Mammary epithelial cell (primary cell): ENCODE measurements at regions of chr1 and their contacts with region 1.

Region 1: DNA sequence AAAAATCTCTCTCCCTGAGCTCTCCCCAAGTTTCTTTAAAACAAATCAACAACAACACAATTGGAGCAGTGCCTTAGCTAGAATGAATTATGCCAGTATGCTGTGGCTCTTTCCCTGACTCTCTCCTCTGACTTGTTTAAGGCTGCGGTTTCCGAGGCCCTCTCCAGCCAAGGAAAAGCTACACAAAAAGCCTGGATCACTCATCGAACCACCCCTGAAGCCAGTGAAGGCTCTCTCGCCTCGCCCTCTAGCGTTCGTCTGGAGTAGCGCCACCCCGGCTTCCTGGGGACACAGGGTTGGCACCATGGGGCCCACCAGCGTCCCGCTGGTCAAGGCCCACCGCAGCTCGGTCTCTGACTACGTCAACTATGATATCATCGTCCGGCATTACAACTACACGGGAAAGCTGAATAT is 1.9 kb downstream of the S1PR1 start:
- DNase-seq: peak; percentile 83
- H3K4me3 ChIP-seq: peak overlapping the region in 2 of 3 experiments; percentile 36 to 87
- H3K27ac ChIP-seq: peak overlapping the region; percentile 34
- H3K4me1 ChIP-seq: peaks cover 12% of the 10 kb centered on the region
- H3K27me3 ChIP-seq: no peaks in the 10 kb centered on the region
- CTCF ChIP-seq: peak; percentile 97 to 98

Region 2: DNA sequence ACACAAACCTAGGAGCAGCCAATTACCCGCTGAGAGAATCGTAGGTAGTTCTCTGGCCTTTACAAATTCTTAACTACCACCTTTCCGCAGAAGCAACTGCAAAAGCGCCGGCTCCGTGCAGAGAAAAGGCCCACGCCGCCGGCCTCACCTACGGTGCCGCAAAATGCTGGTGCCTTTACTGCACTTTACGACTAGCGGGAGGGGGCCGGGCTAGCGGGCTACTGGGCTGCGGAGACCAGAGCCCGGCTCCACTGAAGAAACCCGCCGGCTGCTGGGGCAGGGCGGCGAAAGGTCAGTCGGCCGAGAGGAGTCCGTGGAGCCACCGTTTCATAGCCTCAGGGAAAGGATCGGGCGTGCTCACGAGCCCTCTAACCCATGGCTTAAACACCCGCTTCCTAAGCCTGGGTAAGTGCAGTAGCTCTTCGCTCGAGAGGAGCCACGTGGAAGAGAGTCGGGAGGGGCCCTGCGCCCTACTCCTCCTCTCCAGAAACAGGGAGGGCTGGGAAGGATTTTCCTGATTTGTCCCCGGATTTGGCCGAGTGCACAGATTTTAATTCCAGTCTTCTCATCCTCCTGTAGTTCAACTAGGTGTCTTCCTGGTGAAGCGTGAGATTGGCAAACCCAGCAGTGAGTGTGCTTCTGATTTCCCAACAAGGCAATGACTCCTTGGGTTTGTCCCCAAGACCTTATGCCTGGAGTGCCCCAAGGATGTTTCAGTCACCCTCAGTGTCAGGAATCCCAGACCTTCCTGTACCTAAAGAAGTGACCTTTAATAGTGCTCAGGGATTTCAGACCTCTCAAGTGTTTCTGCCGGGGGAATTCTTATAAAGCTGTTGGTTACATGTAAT is 212.8 kb before region 1 on chr1 and contains the start of gene DPH5:
- CTCF ChIA-PET with region 1: no interaction called
- dilution Hi-C with region 1: no loop called
- in situ Hi-C with region 1: loop called in 1 of 2 experiments (anchors 10 kb)
- intact Hi-C with region 1: loop called (anchors 1 kb)
- DNase-seq: peak; percentile 88
- H3K4me3 ChIP-seq: peak within 1 kb of the TSS; percentile 71 to 97 (median 94)
- H3K27ac ChIP-seq: peak within 1 kb of the TSS; percentile 80
- H3K4me1 ChIP-seq: no peaks in the 10 kb centered on the region
- H3K27me3 ChIP-seq: no peaks in the 10 kb centered on the region
- CTCF ChIP-seq: no peak
- total RNA-seq, gene DPH5: 21.2 to 47.0 TPM

Region 3: GRCh38 chr1:101136739-101137138 is 101.9 kb before region 1 on chr1:
- CTCF ChIA-PET with region 1: interaction called, 3 read pairs
- dilution Hi-C with region 1: no loop called
- in situ Hi-C with region 1: no loop called
- intact Hi-C with region 1: loop called (anchors 1 kb)
- DNase-seq: no peak
- H3K4me3 ChIP-seq: no peak overlapping the region
- H3K27ac ChIP-seq: no peak overlapping the region
- H3K4me1 ChIP-seq: peaks cover 12% of the 10 kb centered on the region
- H3K27me3 ChIP-seq: no peaks in the 10 kb centered on the region
- CTCF ChIP-seq: peak in 1 of 2 donors; percentile 15

Region 4: DNA sequence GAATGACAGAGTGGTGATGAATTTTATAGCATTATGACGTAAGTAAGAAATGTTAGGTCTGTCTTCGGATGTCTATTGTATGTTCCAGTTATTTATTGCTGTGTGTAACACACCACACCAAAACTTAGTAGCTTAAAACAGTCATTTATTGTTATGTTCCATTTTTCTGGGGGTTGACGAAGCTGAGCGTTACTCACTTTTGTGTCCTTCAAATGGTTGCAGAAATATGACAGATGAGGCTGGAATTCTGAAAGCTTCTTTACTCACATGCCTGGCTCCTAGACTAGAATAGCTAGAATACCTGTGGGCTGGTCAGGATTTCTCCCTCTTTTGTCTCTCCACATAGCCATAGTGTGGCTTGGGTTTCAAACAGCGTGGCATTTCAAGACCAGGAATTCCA is 64.0 kb before region 1 on chr1:
- CTCF ChIA-PET with region 1: no interaction called
- dilution Hi-C with region 1: no loop called
- in situ Hi-C with region 1: no loop called
- intact Hi-C with region 1: loop called (anchors 1 kb)
- DNase-seq: peak; percentile 87
- H3K4me3 ChIP-seq: no peak overlapping the region
- H3K27ac ChIP-seq: peak overlapping the region; percentile 58
- H3K4me1 ChIP-seq: peaks cover 23% of the 10 kb centered on the region
- H3K27me3 ChIP-seq: no peaks in the 10 kb centered on the region
- CTCF ChIP-seq: no peak

Region 5: DNA sequence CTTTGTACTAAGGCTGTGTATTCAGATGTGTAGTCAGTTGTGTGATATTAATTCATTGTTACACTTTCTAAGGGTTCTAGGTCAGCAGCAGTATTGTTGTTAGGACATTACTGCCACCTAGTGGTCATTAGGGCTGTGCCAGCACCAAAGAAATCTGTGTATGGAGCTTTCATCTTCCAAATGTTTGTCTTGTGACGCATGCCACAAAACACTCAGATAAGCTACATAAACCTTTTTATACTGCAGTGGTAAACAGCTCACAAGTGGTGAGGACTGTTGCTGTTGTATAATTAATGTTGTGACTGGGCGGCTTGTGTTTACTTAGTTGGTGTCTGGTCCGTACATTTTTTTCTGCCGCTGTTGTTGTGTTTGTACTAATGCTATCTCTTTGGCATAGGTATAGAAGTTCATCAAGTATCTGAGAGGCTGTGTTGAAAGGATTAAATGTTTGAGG is 49.8 kb after region 1 on chr1:
- CTCF ChIA-PET with region 1: interaction called, 47 read pairs
- dilution Hi-C with region 1: no loop called
- in situ Hi-C with region 1: no loop called
- intact Hi-C with region 1: loop called (anchors 1 kb)
- DNase-seq: peak; percentile 80
- H3K4me3 ChIP-seq: no peak overlapping the region
- H3K27ac ChIP-seq: no peak overlapping the region
- H3K4me1 ChIP-seq: peaks cover 11% of the 10 kb centered on the region
- H3K27me3 ChIP-seq: no peaks in the 10 kb centered on the region
- CTCF ChIP-seq: peak; percentile 88 to 90